MCF 10A (cell line): ENCODE measurements at regions of chr5 and their contacts with region 1.

Region 1: DNA sequence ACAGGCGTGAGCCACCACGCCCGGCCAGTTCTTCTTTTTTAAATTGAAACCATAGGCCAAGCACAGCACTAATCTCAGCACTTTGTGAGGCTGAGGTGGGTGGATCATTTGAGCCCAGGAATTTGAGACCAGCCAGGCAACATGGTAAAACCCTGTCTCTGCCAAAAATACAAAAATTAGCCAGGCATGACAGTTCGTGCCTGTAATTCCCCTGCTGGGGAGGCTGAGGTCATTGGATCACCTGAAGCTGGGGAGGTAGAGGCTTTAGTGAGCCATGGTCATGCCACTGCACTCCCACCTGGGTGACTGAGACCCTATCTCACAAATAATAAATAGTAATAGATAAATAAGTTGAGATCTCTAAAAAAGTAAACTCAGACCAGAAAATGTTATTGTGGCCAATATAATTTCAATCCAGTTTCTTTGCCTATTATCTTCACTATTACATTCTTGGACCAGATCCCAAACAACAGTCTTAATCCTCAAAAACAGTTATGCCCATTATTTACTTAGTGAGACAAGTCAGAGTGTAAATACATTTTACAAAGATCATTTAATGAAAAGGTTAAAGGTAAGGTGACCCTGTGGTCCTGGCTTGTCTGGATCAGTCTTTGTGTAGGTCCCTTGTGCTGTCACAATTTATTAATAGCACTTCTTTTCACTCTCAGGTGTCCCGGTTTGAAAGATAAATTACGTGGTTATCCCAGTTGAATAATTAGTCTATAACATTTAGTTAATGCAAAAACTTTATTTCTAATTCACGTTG is 53.6 kb downstream of the RAB24 start:
- DNase-seq: no peak
- H3K4me3 Mint-ChIP-seq: no peak overlapping the region
- H3K27ac Mint-ChIP-seq: no peak overlapping the region
- H3K4me1 Mint-ChIP-seq: no peaks in the 10 kb centered on the region
- H3K27me3 Mint-ChIP-seq: no peaks in the 10 kb centered on the region
- CTCF ChIP-seq: no peak

Region 2: GRCh38 chr5:177232761-177233160 is 17.2 kb before region 1 on chr5:
- CTCF ChIA-PET with region 1: interaction called, 7 read pairs
- POLR2A ChIA-PET with region 1: interaction called, 10 read pairs
- intact Hi-C with region 1: no loop called
- DNase-seq: peak; percentile 27
- H3K4me3 Mint-ChIP-seq: no peak overlapping the region
- H3K27ac Mint-ChIP-seq: peak overlapping the region; percentile 74
- H3K4me1 Mint-ChIP-seq: peaks cover 21% of the 10 kb centered on the region
- H3K27me3 Mint-ChIP-seq: no peaks in the 10 kb centered on the region
- CTCF ChIP-seq: no peak